Tibial artery (tissue), 4 donors: ENCODE measurements at regions of chr4 and their contacts with region 1.

Region 1: GRCh38 chr4:24912252-24913118 is at the start of gene CCDC149:
- DNase-seq: peak; percentile 48 to 81
- H3K4me3 ChIP-seq: peak within 1 kb of the TSS; percentile 67 to 76
- H3K27ac ChIP-seq: peak within 1 kb of the TSS; percentile 89 to 92
- H3K4me1 ChIP-seq: peaks cover 0 to 13% (median 5%) of the 10 kb centered on the region in 4 donors
- H3K27me3 ChIP-seq: no peaks in the 10 kb centered on the region
- CTCF ChIP-seq: no peak

Region 2: GRCh38 chr4:24809376-24809775 is 103.1 kb before region 1 on chr4:
- intact Hi-C with region 1: loop called (anchors 5 kb)
- DNase-seq: no peak
- H3K4me3 ChIP-seq: no peak overlapping the region
- H3K27ac ChIP-seq: peak overlapping the region; percentile 17 to 62
- H3K4me1 ChIP-seq: peaks cover 0 to 37% (median 0%) of the 10 kb centered on the region in 4 donors
- H3K27me3 ChIP-seq: no peaks in the 10 kb centered on the region
- CTCF ChIP-seq: no peak

Region 3: GRCh38 chr4:24850674-24851073 is 61.8 kb before region 1 on chr4:
- intact Hi-C with region 1: loop called (anchors 2 kb)
- DNase-seq: peak; percentile 56 to 81
- H3K4me3 ChIP-seq: no peak overlapping the region
- H3K27ac ChIP-seq: peak overlapping the region; percentile 53
- H3K4me1 ChIP-seq: peaks cover 0 to 52% (median 22%) of the 10 kb centered on the region in 4 donors
- H3K27me3 ChIP-seq: no peaks in the 10 kb centered on the region
- CTCF ChIP-seq: no peak